ENCODE measurements at regions of chr3 and their contacts with region 1.

Region 1: GRCh38 chr3:159804726-159805410 is 183.8 kb upstream of the IL12A start:
- DNase-seq: peak; percentile 79
- H3K27ac ChIP-seq: no peak overlapping the region
- CTCF ChIP-seq: peak; percentile 88

Region 2: GRCh38 chr3:159763602-159764489 is 41.0 kb before region 1 on chr3:
- CTCF ChIA-PET with region 1: interaction called, 10 read pairs
- POLR2A ChIA-PET with region 1: interaction called, 3 read pairs
- DNase-seq: peak; percentile 87
- H3K27ac ChIP-seq: peak overlapping the region; percentile 98
- CTCF ChIP-seq: peak; percentile 12; the same call in 1 of the 2 replicates